Endothelial cell of umbilical vein (primary cell): ENCODE measurements at regions of chr14 and their contacts with region 1.

Region 1: DNA sequence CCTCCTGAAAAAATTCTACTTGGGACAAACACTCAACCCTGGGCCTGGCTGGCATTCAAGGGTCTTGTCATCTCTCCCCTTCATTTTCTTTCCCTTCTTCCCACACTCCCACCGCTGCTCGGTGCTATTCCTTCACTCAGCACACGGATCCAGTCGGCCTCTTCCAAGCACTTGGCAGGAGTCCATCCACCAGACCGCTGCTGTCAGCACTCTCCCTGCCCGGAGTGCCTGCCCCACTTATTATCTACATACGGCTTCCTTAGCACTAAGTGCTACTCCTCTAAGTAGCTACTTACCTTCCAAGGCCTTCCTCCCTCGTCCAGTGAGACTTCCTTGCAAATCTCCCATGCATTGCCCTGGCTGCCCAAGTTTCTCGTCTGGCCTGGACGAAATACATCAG is 29.8 kb downstream of the CALM1 start:
- DNase-seq: peak; percentile 69
- H3K4me3 ChIP-seq: no peak overlapping the region
- H3K27ac ChIP-seq: no peak overlapping the region
- H3K4me1 ChIP-seq: peaks cover 21% of the 10 kb centered on the region
- H3K27me3 ChIP-seq: no peaks in the 10 kb centered on the region
- CTCF ChIP-seq: no peak
- POLR2A ChIP-seq: no peak

Region 2: GRCh38 chr14:90444036-90444696 is 17.5 kb after region 1 on chr14:
- CTCF ChIA-PET with region 1: no interaction called
- POLR2A ChIA-PET with region 1: no interaction called
- dilution Hi-C with region 1: no loop called
- intact Hi-C with region 1: loop called (anchors 1 kb)
- DNase-seq: peak; percentile 75
- H3K4me3 ChIP-seq: no peak overlapping the region
- H3K27ac ChIP-seq: no peak overlapping the region
- H3K4me1 ChIP-seq: peaks cover 7% of the 10 kb centered on the region
- H3K27me3 ChIP-seq: no peaks in the 10 kb centered on the region
- CTCF ChIP-seq: no peak
- POLR2A ChIP-seq: no peak

Region 3: GRCh38 chr14:90527978-90528377 is 101.3 kb after region 1 on chr14:
- CTCF ChIA-PET with region 1: no interaction called
- POLR2A ChIA-PET with region 1: no interaction called
- dilution Hi-C with region 1: no loop called
- intact Hi-C with region 1: no loop called
- DNase-seq: no peak
- H3K4me3 ChIP-seq: no peak overlapping the region
- H3K27ac ChIP-seq: no peak overlapping the region
- H3K4me1 ChIP-seq: no peaks in the 10 kb centered on the region
- H3K27me3 ChIP-seq: no peaks in the 10 kb centered on the region
- CTCF ChIP-seq: no peak
- POLR2A ChIP-seq: no peak